Prostate gland (tissue), 2 donors: ENCODE measurements at regions of chr1 and their contacts with region 1.

Region 1: DNA sequence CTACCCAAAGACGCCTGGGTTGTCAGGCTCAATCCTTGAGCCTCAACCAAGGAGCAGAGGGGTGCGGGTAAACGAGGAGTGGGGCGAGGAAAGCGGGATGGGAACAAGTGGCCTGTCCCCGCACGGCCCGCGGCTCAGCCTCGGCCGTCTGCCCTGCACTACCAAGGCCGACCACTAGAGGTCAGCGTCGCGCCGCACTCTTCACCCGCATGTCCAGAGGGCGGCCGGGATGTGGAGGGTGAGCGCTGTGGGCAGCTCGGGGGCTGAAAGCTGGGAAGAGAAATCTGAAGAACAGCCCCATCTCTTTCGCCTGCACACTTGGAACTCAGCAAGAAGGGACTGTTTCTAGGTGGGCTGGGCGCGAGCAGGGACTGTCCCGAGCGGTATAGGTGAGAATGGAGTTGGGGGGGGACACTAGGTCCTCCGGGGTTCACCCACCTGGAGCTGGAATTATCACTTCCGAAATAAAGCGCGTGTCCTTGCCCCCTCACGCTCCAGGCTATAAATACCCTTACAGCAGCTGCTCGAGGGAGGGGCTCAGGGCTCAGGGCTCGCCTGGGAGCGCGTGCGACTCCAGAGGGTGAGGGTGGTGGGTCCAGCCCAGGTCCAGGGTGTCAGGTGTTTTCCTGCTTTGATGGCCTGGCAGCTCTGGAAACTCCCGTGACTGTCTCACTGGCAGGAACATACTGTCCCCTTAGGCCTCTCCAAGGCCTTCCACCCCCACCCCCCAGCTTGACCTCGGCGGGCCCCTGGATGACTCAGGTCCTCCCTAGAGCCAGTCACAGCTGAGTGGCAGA is 9.8 kb downstream of the SLC30A2 start:
- DNase-seq: peak; percentile 63
- H3K4me3 ChIP-seq: peak overlapping the region; percentile 68 to 76
- H3K27ac ChIP-seq: peak overlapping the region; percentile 81 to 83
- H3K4me1 ChIP-seq: peaks cover 8% of the 10 kb centered on the region
- H3K27me3 ChIP-seq: no peaks in the 10 kb centered on the region
- CTCF ChIP-seq: peak; percentile 96 to 100 (median 98)
- POLR2A ChIP-seq: no peak

Region 2: DNA sequence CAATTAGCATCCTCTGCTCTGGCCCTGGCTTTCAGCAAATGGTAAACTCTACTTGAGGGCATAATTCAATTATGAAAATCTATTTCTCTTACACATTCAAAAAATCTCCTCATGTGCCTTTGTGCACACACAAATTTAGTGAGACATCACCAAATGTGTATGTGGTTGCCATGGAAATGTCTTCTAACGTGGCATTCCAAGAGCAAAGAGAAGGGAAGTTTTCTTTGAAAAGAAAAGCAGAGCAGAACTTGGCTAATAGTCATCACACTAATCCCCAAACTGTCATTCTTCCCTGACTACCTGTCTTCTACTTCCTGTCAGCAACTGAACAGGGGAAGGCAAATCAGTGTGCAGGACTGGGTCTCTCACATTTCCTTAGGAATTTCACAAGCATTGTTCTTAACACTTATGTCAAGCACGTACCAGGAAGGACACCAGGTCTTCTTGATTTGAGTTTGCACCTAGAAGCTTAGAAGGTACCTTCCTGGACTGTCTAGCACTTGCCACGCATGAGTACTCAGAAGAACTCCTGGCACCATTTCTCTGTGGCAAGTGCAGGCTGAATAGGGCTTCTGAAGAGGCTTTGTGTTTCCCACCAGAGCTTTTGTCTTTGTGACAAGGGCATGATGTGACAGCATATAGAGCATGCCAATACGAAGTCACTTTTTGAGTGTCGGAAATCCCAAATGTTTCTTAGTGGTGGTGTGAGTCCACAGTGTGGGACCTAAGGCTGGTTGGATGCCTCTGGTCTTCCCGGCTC is 387.3 kb before region 1 on chr1:
- intact Hi-C with region 1: no loop called
- DNase-seq: no peak
- H3K4me3 ChIP-seq: no peak overlapping the region
- H3K27ac ChIP-seq: no peak overlapping the region
- H3K4me1 ChIP-seq: no peaks in the 10 kb centered on the region
- H3K27me3 ChIP-seq: no peaks in the 10 kb centered on the region
- CTCF ChIP-seq: no peak
- POLR2A ChIP-seq: no peak

Region 3: DNA sequence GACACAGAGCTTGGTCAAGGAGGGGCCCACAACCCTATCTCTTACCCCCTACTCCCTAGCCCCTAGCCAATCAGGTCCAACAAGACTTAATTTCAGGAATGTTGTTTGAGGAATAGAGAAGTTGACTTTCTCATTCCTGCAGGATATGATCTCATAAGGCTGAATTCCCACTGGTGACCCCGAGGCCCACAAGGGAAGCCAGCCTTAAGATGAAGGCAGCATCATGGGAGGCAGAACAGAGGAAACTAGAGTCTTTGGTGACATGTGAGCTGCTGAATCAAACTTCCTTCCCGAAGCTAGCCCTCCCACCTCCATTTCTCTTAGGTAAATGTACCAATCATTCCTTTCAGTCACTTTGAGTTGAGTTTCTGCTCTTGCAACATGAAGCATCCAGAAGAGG is 66.4 kb after region 1 on chr1:
- intact Hi-C with region 1: loop called (anchors 5 kb)
- DNase-seq: no peak
- H3K4me3 ChIP-seq: no peak overlapping the region
- H3K27ac ChIP-seq: no peak overlapping the region
- H3K4me1 ChIP-seq: no peaks in the 10 kb centered on the region
- H3K27me3 ChIP-seq: no peaks in the 10 kb centered on the region
- CTCF ChIP-seq: no peak
- POLR2A ChIP-seq: no peak

Region 4: GRCh38 chr1:26111530-26112406 is 75.6 kb after region 1 on chr1 and contains the start of gene PDIK1L:
- intact Hi-C with region 1: loop called (anchors 2 kb)
- DNase-seq: peak; percentile 92
- H3K4me3 ChIP-seq: peak within 1 kb of the TSS; percentile 87 to 88
- H3K27ac ChIP-seq: peak within 1 kb of the TSS; percentile 87 to 92
- H3K4me1 ChIP-seq: no peaks in the 10 kb centered on the region
- H3K27me3 ChIP-seq: no peaks in the 10 kb centered on the region
- CTCF ChIP-seq: peak in 2 of 4 experiments; percentile 16 to 17
- POLR2A ChIP-seq: peak; percentile 80
- total RNA-seq, gene PDIK1L: 10.5 TPM

Region 5: DNA sequence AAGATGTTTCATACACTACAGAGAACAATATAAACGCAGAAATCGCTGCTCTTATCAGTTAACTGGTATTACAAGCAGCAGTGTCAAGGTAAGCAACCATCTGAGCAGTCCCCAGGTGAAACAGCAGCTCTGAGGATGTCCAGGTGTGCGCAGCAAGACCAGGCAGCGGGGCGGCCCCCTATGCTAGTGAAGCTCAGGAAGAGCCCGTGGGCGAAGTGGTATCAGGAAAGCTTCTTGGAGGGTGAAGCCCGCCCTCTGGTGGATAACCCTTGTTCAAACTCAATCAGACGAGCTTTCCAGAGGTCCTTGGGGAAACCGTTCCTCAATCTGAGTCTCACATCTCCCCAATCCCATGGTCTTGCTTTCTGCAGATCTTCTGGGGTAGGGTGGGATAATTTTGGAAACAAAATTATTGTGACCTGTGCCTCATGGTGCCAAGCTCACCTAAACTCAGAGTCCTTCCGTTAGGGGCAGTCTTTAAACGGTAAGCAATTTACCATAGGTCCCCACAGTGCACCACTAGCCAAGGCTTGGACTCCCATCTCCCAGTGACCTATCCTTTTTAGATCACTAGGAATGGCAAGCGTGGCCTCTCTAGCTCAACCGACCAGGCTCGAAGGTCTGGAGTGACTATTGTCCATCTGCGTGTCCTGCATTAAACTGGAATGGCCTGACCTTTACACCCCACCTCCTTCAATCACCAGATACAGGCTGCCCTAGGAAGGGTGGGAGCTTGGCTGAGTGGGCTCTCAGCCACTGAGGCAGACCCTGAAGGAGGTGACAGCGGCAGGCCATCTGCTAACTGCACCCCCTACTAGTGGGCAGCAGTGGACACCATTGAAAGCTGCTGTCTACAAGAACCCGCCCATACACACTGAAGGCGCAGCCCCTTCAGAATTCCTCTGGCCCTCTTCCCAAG is 109.1 kb after region 1 on chr1:
- intact Hi-C with region 1: loop called (anchors 5 kb)
- DNase-seq: peak; percentile 85
- H3K4me3 ChIP-seq: no peak overlapping the region
- H3K27ac ChIP-seq: no peak overlapping the region
- H3K4me1 ChIP-seq: no peaks in the 10 kb centered on the region
- H3K27me3 ChIP-seq: no peaks in the 10 kb centered on the region
- CTCF ChIP-seq: peak; percentile 33 to 85 (median 82)
- POLR2A ChIP-seq: no peak

Region 6: DNA sequence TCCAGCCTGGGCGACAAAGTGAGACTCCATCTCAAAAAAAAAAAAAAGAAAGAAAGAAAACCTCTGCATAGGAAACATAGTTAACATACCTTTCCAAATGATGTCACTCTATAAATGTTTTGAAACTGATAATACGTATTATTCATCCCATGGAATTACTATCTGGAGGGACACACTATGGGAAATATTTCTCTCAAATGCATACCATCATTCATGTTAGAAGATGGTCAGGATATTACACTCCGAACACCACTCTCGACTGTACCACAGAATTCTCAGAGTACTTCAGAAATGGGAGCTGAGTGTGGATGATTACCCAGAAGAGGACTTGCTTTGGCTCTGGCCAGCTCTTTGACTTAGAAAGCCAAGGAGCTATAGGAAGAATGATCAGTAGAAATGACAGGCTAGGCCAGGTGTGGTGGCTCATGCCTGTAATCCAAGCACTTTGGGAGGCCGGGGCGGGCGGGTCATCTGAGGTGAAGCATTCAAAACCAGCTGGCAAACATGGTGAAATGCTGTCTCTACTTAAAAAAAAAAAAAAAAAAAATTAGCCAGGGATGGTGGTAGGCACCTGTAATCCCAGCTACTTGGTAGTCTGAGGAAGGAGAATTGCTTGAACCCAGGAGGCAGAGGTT is 369.2 kb after region 1 on chr1:
- intact Hi-C with region 1: no loop called
- DNase-seq: no peak
- H3K4me3 ChIP-seq: no peak overlapping the region
- H3K27ac ChIP-seq: no peak overlapping the region
- H3K4me1 ChIP-seq: no peaks in the 10 kb centered on the region
- H3K27me3 ChIP-seq: peaks cover 7% of the 10 kb centered on the region
- CTCF ChIP-seq: no peak
- POLR2A ChIP-seq: no peak